Caco-2 (cell line): ENCODE measurements at regions of chr17 and their contacts with region 1.

Region 1: GRCh38 chr17:68327823-68328570 is 36.7 kb downstream of the ARSG start:
- DNase-seq: no peak
- H3K4me3 ChIP-seq: no peak overlapping the region
- H3K4me3 Mint-ChIP-seq: peak overlapping the region; percentile 44
- H3K27ac Mint-ChIP-seq: peak overlapping the region; percentile 79
- H3K4me1 ChIP-seq: peaks cover 45% of the 10 kb centered on the region
- H3K4me1 Mint-ChIP-seq: peaks cover 37% of the 10 kb centered on the region
- H3K27me3 ChIP-seq: no peaks in the 10 kb centered on the region
- H3K27me3 Mint-ChIP-seq: peaks cover 10% of the 10 kb centered on the region
- CTCF ChIP-seq: no peak

Region 2: GRCh38 chr17:68291844-68292695 is 35.9 kb before region 1 on chr17:
- CTCF ChIA-PET with region 1: no interaction called
- POLR2A ChIA-PET with region 1: no interaction called
- intact Hi-C with region 1: loop called (anchors 2 kb)
- DNase-seq: peak; percentile 79 to 86
- H3K4me3 ChIP-seq: peak overlapping the region; percentile 87
- H3K4me3 Mint-ChIP-seq: peak overlapping the region; percentile 76
- H3K27ac Mint-ChIP-seq: peak overlapping the region; percentile 76
- H3K4me1 ChIP-seq: peaks cover 6% of the 10 kb centered on the region; the same call in 1 of the 2 replicates
- H3K4me1 Mint-ChIP-seq: peaks cover 8% of the 10 kb centered on the region
- H3K27me3 ChIP-seq: no peaks in the 10 kb centered on the region
- H3K27me3 Mint-ChIP-seq: peaks cover 3% of the 10 kb centered on the region
- CTCF ChIP-seq: peak in 1 of 2 experiments; percentile 26

Region 3: GRCh38 chr17:68381076-68381900 is 53.3 kb after region 1 on chr17:
- CTCF ChIA-PET with region 1: no interaction called
- POLR2A ChIA-PET with region 1: no interaction called
- intact Hi-C with region 1: loop called (anchors 5 kb)
- DNase-seq: no peak
- H3K4me3 ChIP-seq: no peak overlapping the region
- H3K4me3 Mint-ChIP-seq: no peak overlapping the region
- H3K27ac Mint-ChIP-seq: no peak overlapping the region
- H3K4me1 ChIP-seq: peaks cover 41% of the 10 kb centered on the region
- H3K4me1 Mint-ChIP-seq: peaks cover 27% of the 10 kb centered on the region
- H3K27me3 ChIP-seq: no peaks in the 10 kb centered on the region
- H3K27me3 Mint-ChIP-seq: no peaks in the 10 kb centered on the region
- CTCF ChIP-seq: no peak